HEK293T (cell line): ENCODE measurements at regions of chr7 and their contacts with region 1.

Region 1: DNA sequence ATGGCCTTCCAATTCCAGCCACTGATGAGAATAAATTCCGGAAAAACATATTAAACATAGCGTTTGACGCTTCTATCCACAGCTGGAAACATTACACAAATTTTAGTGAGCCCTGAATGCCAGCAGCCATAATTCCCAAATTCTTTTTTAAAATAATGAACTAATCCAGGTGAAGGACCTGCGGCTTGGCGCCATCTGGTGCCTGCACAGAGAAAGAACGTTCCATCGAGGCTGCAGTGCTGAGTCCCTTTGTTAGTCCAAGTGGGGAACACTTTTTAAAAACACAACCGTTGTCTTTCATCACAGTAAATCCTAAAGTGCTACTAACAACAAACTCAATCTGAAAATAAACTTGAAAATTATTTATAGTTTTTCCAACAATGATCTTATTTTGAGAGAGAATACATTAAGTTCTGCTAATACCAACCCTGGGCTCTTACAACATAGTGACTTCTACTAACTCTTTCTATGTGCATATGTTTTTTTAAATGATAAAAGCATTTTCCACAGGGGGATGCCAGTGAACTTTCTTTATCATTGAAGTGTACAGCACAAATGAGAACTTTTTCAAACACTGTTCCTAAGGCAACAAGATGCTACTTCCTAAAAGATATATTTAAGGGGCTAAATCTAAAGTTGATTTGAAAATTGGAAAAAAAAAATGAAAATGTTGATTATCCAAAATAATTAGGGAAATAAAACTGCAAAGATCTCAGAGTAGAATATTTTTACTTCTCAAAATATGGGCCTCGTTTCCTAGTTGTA is 166.9 kb upstream of the RNF32 start:
- DNase-seq: peak; percentile 70

Region 2: DNA sequence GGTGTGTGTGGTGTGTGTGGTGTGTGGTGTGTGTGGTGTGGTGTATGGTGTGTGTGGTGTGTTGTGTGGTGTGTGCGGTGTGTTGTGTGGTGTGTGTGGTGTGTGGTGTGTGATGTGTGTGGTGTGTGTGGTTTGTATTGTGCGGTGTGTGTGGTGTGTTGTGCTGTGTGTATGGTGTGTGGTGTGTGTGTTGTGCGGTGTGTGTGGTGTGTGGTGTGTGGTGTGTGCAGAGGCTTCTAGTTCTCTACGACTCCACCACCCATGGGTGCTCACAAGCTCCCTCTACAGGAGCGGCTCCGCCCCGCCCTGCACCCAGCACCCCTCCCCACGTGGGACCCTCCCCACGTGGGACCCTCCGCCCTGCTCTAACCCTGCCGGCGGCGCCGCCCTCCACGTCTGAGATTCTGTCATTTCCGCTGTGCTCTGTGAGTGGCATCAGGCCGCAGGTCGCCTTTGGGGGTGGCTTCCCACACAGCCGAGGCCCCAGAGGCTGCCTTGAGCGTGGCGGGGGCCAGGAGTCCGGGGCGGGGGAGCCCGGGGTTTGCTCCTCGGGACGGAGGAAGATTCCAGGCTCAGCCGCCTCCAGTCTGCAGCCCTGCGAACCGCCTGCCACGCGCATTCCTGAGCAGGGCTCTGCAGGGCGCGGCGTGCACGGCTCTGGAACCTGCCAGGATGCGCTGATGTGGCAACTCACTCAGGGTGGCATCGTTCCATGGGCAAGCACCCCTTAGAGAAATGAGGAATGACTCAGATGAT is 826.1 kb after region 1 on chr7:
- CTCF ChIA-PET with region 1: interaction called, 11 read pairs
- POLR2A ChIA-PET with region 1: no interaction called
- DNase-seq: no peak